H1 (cell line): ENCODE measurements at regions of chr11 and their contacts with region 1.

Region 1: DNA sequence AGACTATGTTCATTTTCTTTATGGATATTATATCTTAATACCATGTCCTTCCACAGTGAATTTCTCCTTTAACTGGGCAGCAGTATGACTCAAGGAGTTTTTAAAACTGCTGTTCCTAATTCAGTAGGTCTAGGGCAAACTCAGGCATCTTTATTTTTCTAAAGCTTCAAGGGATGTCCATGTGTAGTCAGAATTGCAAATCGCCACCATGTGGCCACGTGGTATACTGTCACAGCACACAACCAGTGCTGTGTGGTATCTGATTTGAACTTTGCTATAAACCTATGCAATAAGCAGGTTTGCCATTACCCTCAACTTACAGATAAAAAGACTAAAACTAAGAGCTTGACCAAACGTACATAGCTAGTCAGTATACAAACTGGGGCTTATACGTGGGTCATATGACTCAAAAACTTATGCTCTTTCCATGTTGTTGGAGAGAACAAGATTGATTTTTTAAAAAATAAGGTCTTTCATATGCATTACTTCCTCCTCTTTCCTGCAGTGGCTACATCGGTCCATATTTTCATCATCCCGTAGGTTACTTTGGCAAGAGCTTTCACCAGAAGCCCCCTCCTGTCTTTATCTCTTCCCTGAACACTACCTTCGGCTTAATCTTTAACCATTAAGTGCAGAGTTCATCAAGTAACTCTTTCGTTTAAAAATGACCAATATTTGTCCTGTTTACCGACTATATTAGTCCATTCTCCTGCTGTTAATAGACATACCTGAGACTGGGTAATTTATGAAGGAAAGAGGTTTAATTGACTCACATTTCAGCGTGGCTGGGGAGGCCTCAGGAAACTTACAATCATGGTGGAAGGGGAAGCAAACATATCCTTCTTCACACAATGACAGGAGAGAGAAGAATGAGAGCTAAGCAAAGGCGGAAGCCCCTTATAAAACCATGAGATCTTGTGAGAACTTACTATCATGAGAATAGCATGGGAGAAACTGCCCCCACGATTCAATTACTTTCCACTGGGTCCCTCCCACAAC is 8.0 kb upstream of the HTATIP2 start:
- DNase-seq: no peak
- H3K4me3 ChIP-seq: no peak overlapping the region
- H3K27ac ChIP-seq: no peak overlapping the region
- H3K4me1 ChIP-seq: no peaks in the 10 kb centered on the region
- H3K27me3 ChIP-seq: no peaks in the 10 kb centered on the region
- CTCF ChIP-seq: peak; percentile 36 to 69 (median 53)
- EP300 ChIP-seq: no peak
- POLR2A ChIP-seq: no peak
- RAD21 ChIP-seq: peak; percentile 49 to 54

Region 2: DNA sequence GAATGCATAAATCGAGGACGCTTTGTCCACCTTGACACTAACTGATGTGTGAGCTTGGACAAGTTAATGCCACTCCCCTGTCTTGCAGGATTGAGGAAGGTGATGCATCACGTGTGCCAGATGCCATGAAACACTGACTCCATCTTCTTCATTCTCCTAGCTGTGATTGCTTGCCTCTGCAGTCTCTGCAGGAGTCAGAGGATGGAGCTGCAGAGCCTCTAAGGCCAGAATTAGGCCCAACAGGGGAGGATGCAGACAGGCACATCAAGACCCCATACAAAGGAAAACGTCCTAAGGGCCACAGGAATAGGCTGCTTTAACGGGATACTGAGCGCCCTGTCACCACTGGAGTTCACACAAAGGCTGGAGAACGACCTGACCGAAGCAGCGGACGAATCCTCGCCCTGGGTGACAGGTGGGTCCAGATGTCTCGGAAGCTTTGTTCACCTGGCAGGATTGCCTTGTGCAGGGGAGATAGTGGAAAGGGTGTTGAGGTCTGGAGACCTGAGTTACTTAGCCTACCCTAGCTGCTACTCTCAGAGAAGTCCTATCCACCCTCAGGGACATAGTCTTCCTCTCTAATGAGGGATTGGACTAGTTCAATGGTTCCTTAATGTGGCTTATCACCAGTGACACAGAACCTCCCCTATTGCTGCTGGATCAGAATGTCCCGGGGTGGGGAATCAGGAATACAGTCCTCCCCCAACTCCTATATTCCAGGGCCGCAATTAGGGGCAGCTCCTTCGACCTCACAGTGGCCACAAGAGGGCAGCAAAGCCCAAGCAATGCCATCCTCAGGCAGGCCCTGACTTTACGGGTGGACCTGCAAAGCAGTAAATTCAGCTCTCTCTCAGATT is 227.6 kb before region 1 on chr11:
- CTCF ChIA-PET with region 1: interaction called, 130 read pairs
- POLR2A ChIA-PET with region 1: interaction called, 3 read pairs
- DNase-seq: peak in 1 of 2 experiments; percentile 95
- H3K4me3 ChIP-seq: no peak overlapping the region
- H3K27ac ChIP-seq: no peak overlapping the region
- H3K4me1 ChIP-seq: peaks cover 0 to 5% (median 4%) of the 10 kb centered on the region in 4 experiments; a peak in 5 of 7 replicates
- H3K27me3 ChIP-seq: peaks cover 8 to 24% (median 17%) of the 10 kb centered on the region in 4 experiments
- CTCF ChIP-seq: peak; percentile 90 to 93 (median 92)
- EP300 ChIP-seq: no peak
- POLR2A ChIP-seq: no peak
- RAD21 ChIP-seq: peak; percentile 98

Region 3: GRCh38 chr11:20162824-20163782 is 192.4 kb before region 1 on chr11:
- CTCF ChIA-PET with region 1: interaction called, 33 read pairs
- POLR2A ChIA-PET with region 1: no interaction called
- DNase-seq: peak in 1 of 2 experiments; percentile 79
- H3K4me3 ChIP-seq: peak overlapping the region; percentile 20 to 63 (median 51); a peak in 7 of 8 replicates
- H3K27ac ChIP-seq: no peak overlapping the region
- H3K4me1 ChIP-seq: peaks cover 13 to 41% (median 20%) of the 10 kb centered on the region in 4 experiments
- H3K27me3 ChIP-seq: peaks cover 52 to 98% (median 90%) of the 10 kb centered on the region in 4 experiments
- CTCF ChIP-seq: no peak
- EP300 ChIP-seq: no peak
- POLR2A ChIP-seq: no peak
- RAD21 ChIP-seq: no peak

Region 4: GRCh38 chr11:20207781-20208621 is 147.5 kb before region 1 on chr11:
- CTCF ChIA-PET with region 1: interaction called, 10 read pairs
- POLR2A ChIA-PET with region 1: no interaction called
- DNase-seq: peak; percentile 13 to 50
- H3K4me3 ChIP-seq: peak overlapping the region; percentile 16 to 48 (median 34); a peak in 6 of 8 replicates
- H3K27ac ChIP-seq: no peak overlapping the region
- H3K4me1 ChIP-seq: peaks cover 0 to 10% (median 5%) of the 10 kb centered on the region in 4 experiments; a peak in 6 of 7 replicates
- H3K27me3 ChIP-seq: peaks cover 60 to 98% (median 83%) of the 10 kb centered on the region in 4 experiments
- CTCF ChIP-seq: no peak
- EP300 ChIP-seq: no peak
- POLR2A ChIP-seq: no peak
- RAD21 ChIP-seq: no peak

Region 5: GRCh38 chr11:20249378-20249777 is 106.1 kb before region 1 on chr11:
- CTCF ChIA-PET with region 1: interaction called, 15 read pairs
- POLR2A ChIA-PET with region 1: no interaction called
- DNase-seq: no peak
- H3K4me3 ChIP-seq: no peak overlapping the region
- H3K27ac ChIP-seq: no peak overlapping the region
- H3K4me1 ChIP-seq: peaks cover 2 to 8% (median 5%) of the 10 kb centered on the region in 4 experiments; a peak in 4 of 7 replicates
- H3K27me3 ChIP-seq: peaks cover 0 to 3% (median 2%) of the 10 kb centered on the region in 4 experiments; a peak in 2 of 7 replicates
- CTCF ChIP-seq: no peak
- EP300 ChIP-seq: no peak
- POLR2A ChIP-seq: no peak
- RAD21 ChIP-seq: no peak

Region 6: DNA sequence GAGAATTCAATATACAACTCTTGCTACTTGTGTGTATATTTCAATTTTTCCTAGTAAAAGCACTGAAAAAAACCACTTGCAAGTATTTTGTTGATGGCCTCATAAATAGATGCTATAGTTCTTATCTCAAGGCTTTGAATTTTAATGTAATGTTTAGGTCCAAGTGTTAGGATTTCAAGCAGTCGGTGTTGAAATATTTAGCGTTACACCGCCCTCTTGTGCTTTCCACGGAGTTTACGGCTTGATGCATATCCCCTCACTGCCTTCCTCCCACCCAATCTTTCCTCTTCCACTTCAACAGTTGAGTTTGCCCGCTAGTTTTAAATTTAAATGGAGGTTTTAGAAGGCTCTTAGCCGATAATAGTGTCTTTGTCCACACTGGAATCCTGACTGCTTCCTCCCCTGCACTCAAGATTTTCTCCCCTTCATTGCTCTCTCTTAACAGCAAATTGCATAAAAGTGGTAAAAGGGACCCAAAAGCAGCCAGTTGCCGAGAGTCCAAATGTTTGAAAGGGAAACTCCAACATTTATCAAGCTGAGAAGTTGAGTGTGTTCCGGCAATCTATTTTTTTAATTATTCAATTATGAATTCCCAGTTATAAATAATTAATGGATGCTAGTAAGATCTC is 17.9 kb before region 1 on chr11:
- CTCF ChIA-PET with region 1: interaction called, 56 read pairs
- POLR2A ChIA-PET with region 1: interaction called, 4 read pairs
- DNase-seq: peak in 1 of 2 experiments; percentile 55
- H3K4me3 ChIP-seq: no peak overlapping the region
- H3K27ac ChIP-seq: no peak overlapping the region
- H3K4me1 ChIP-seq: peaks cover 0 to 4% (median 3%) of the 10 kb centered on the region in 4 experiments; a peak in 6 of 7 replicates
- H3K27me3 ChIP-seq: peaks cover 0 to 1% (median 0%) of the 10 kb centered on the region in 4 experiments; a peak in 2 of 7 replicates
- CTCF ChIP-seq: peak; percentile 51 to 73 (median 61)
- EP300 ChIP-seq: no peak
- POLR2A ChIP-seq: no peak
- RAD21 ChIP-seq: peak; percentile 84 to 87